Naive thymus-derived CD4-positive, alpha-beta T cell (primary cell): ENCODE measurements at regions of chr6 and their contacts with region 1.

Region 1: DNA sequence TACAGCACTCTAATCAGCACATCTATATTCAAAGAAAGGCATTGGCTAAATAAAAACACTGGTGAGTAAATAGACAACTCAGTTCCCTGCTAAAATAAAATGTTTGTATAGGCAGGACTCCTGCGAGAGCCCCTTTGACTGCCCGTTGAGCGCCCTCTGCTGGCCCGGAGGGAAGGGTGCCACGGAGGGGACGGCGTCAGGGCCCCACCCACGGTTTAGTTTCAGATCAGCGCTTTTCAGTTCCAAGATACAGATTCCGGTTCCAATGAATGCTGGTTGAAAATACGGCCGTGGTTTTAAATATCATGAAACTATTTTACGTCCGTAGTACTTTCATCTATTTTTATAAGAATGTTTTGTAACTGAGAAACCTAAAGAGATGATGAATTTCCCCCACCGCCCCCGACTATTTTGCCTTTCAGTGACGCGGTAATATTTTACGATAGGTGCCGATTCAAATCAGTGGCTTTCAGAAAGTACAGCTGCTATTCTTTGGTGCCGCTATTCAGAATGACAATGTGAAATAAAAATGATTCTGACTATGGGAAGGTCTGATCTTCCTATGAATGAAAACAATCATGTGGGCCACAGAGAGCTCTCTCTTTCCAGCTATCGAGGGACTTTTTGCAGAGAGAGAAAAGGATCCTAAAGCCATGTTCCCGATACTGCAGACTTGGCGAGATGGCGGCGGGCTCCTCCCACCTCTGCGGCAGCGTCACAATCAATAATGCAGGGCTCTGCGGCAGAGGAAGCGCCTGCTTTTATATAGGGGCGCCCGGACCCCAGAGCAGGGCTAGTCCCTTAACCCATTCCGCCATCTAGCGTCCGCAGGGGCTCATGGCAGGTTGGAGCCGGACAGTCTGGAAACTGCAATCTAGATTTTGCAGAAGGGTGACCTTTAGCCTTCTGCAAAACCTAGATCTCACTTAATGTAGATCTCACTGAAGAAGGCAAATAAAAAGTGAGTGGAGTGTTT is 10.6 kb upstream of the CCN6 start:
- DNase-seq: peak; percentile 82 to 93 (median 90)
- ATAC-seq: peak; percentile 95
- H3K4me3 ChIP-seq: peak overlapping the region; percentile 92
- H3K4me3 Mint-ChIP-seq: peak overlapping the region; percentile 92 to 99 (median 98)
- H3K27ac ChIP-seq: peak overlapping the region; percentile 91
- H3K27ac Mint-ChIP-seq: peak overlapping the region; percentile 96 to 100 (median 99)
- H3K4me1 ChIP-seq: peaks cover 5 to 24% of the 10 kb centered on the region in 2 donors
- H3K4me1 Mint-ChIP-seq: peaks cover 10 to 51% (median 35%) of the 10 kb centered on the region in 7 donors
- H3K27me3 ChIP-seq: no peaks in the 10 kb centered on the region
- H3K27me3 Mint-ChIP-seq: no peaks in the 10 kb centered on the region

Region 2: DNA sequence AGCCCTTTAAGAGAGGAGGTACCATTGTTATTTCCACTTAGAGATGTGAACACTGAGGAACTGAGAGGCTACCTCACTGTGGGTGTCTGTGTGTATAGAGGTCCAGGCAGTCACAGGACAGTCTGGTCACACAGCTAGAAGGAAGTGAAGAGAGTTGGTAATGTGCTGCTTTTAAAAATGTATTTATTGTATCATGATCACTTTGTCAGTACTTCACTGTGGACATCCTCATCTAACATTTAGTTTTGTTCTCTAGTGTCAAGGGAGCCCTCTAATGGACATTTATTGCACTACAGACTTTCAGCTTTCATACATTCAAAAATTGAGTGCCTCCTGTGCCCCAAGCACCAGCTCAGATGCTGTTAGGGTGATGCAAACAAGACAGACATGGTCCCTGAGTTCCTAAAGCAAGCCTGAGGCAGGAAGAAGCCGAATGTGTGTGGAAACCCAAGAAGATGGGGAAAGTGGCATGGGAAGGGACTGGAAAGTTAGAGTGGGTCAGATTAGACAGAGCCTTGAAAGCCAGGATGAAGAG is 833.1 kb before region 1 on chr6:
- CTCF ChIA-PET with region 1: no interaction called
- POLR2A ChIA-PET with region 1: no interaction called
- intact Hi-C with region 1: loop called in 1 of 2 experiments (anchors 1 kb)
- DNase-seq: peak in 7 of 9 donors; percentile 46 to 73 (median 63)
- ATAC-seq: peak; percentile 88
- H3K4me3 ChIP-seq: no peak overlapping the region
- H3K4me3 Mint-ChIP-seq: no peak overlapping the region
- H3K27ac ChIP-seq: no peak overlapping the region
- H3K27ac Mint-ChIP-seq: peak overlapping the region in 1 of 9 donors; percentile 8
- H3K4me1 ChIP-seq: no peaks in the 10 kb centered on the region
- H3K4me1 Mint-ChIP-seq: peaks cover 0 to 18% (median 9%) of the 10 kb centered on the region in 7 donors
- H3K27me3 ChIP-seq: no peaks in the 10 kb centered on the region
- H3K27me3 Mint-ChIP-seq: no peaks in the 10 kb centered on the region

Region 3: GRCh38 chr6:111483736-111484632 is 559.3 kb before region 1 on chr6:
- CTCF ChIA-PET with region 1: interaction called, 5 read pairs
- POLR2A ChIA-PET with region 1: no interaction called
- intact Hi-C with region 1: loop called (anchors 1 kb)
- DNase-seq: peak in 6 of 9 donors; percentile 80 to 89 (median 86)
- ATAC-seq: peak; percentile 79
- H3K4me3 ChIP-seq: peak overlapping the region; percentile 93
- H3K4me3 Mint-ChIP-seq: peak overlapping the region; percentile 96 to 100 (median 98)
- H3K27ac ChIP-seq: peak overlapping the region; percentile 99
- H3K27ac Mint-ChIP-seq: peak overlapping the region; percentile 95 to 99 (median 99)
- H3K4me1 ChIP-seq: peaks cover 14 to 29% of the 10 kb centered on the region in 2 donors
- H3K4me1 Mint-ChIP-seq: peaks cover 28 to 59% (median 52%) of the 10 kb centered on the region in 7 donors
- H3K27me3 ChIP-seq: no peaks in the 10 kb centered on the region
- H3K27me3 Mint-ChIP-seq: peaks cover 0 to 3% (median 0%) of the 10 kb centered on the region in 5 donors

Region 4: GRCh38 chr6:111804627-111805235 is 238.6 kb before region 1 on chr6:
- CTCF ChIA-PET with region 1: interaction called, 4 read pairs
- POLR2A ChIA-PET with region 1: no interaction called
- intact Hi-C with region 1: loop called (anchors 1 kb)
- DNase-seq: peak in 8 of 9 donors; percentile 31 to 77 (median 56)
- ATAC-seq: peak; percentile 89
- H3K4me3 ChIP-seq: peak overlapping the region; percentile 7
- H3K4me3 Mint-ChIP-seq: peak overlapping the region; percentile 20 to 73 (median 64)
- H3K27ac ChIP-seq: peak overlapping the region; percentile 68
- H3K27ac Mint-ChIP-seq: peak overlapping the region; percentile 78 to 97 (median 92)
- H3K4me1 ChIP-seq: peaks cover 59 to 64% of the 10 kb centered on the region in 2 donors
- H3K4me1 Mint-ChIP-seq: peaks cover 54 to 96% (median 88%) of the 10 kb centered on the region in 7 donors
- H3K27me3 ChIP-seq: no peaks in the 10 kb centered on the region
- H3K27me3 Mint-ChIP-seq: no peaks in the 10 kb centered on the region

Region 5: GRCh38 chr6:111973118-111973761 is 70.1 kb before region 1 on chr6:
- CTCF ChIA-PET with region 1: no interaction called
- POLR2A ChIA-PET with region 1: interaction called, 3 read pairs
- intact Hi-C with region 1: loop called in 1 of 2 experiments (anchors 1 kb)
- DNase-seq: peak; percentile 41 to 92 (median 88)
- ATAC-seq: peak; percentile 90
- H3K4me3 ChIP-seq: peak overlapping the region; percentile 17
- H3K4me3 Mint-ChIP-seq: peak overlapping the region; percentile 55 to 82 (median 67)
- H3K27ac ChIP-seq: peak overlapping the region; percentile 95
- H3K27ac Mint-ChIP-seq: peak overlapping the region; percentile 84 to 99 (median 96)
- H3K4me1 ChIP-seq: peaks cover 7 to 77% of the 10 kb centered on the region in 2 donors
- H3K4me1 Mint-ChIP-seq: peaks cover 37 to 95% (median 82%) of the 10 kb centered on the region in 7 donors
- H3K27me3 ChIP-seq: no peaks in the 10 kb centered on the region
- H3K27me3 Mint-ChIP-seq: peaks cover 0 to 10% (median 0%) of the 10 kb centered on the region in 5 donors

Region 6: GRCh38 chr6:112018619-112019416 is 24.5 kb before region 1 on chr6:
- CTCF ChIA-PET with region 1: interaction called, 339 read pairs
- POLR2A ChIA-PET with region 1: interaction called, 175 read pairs
- intact Hi-C with region 1: no loop called
- DNase-seq: no peak
- ATAC-seq: no peak
- H3K4me3 ChIP-seq: no peak overlapping the region
- H3K4me3 Mint-ChIP-seq: no peak overlapping the region
- H3K27ac ChIP-seq: no peak overlapping the region
- H3K27ac Mint-ChIP-seq: peak overlapping the region in 3 of 9 donors; percentile 4 to 58 (median 19)
- H3K4me1 ChIP-seq: peaks cover 0 to 5% of the 10 kb centered on the region in 2 donors
- H3K4me1 Mint-ChIP-seq: peaks cover 21 to 80% (median 45%) of the 10 kb centered on the region in 7 donors
- H3K27me3 ChIP-seq: no peaks in the 10 kb centered on the region
- H3K27me3 Mint-ChIP-seq: no peaks in the 10 kb centered on the region

Region 7: GRCh38 chr6:112109262-112109661 is 65.9 kb after region 1 on chr6:
- CTCF ChIA-PET with region 1: no interaction called
- POLR2A ChIA-PET with region 1: no interaction called
- intact Hi-C with region 1: no loop called
- DNase-seq: no peak
- ATAC-seq: no peak
- H3K4me3 ChIP-seq: no peak overlapping the region
- H3K4me3 Mint-ChIP-seq: no peak overlapping the region
- H3K27ac ChIP-seq: no peak overlapping the region
- H3K27ac Mint-ChIP-seq: no peak overlapping the region
- H3K4me1 ChIP-seq: no peaks in the 10 kb centered on the region
- H3K4me1 Mint-ChIP-seq: no peaks in the 10 kb centered on the region
- H3K27me3 ChIP-seq: no peaks in the 10 kb centered on the region
- H3K27me3 Mint-ChIP-seq: peaks cover 0 to 45% (median 24%) of the 10 kb centered on the region in 5 donors

Region 8: GRCh38 chr6:112163295-112164257 is 120.3 kb after region 1 on chr6:
- CTCF ChIA-PET with region 1: no interaction called
- POLR2A ChIA-PET with region 1: no interaction called
- intact Hi-C with region 1: loop called in 1 of 2 experiments (anchors 1 kb)
- DNase-seq: peak; percentile 43 to 81 (median 64)
- ATAC-seq: peak; percentile 97
- H3K4me3 ChIP-seq: no peak overlapping the region
- H3K4me3 Mint-ChIP-seq: peak overlapping the region; percentile 49 to 88 (median 79)
- H3K27ac ChIP-seq: no peak overlapping the region
- H3K27ac Mint-ChIP-seq: peak overlapping the region in 7 of 9 donors; percentile 10 to 79 (median 48)
- H3K4me1 ChIP-seq: peaks cover 3 to 7% of the 10 kb centered on the region in 2 donors
- H3K4me1 Mint-ChIP-seq: peaks cover 9 to 18% (median 14%) of the 10 kb centered on the region in 7 donors
- H3K27me3 ChIP-seq: no peaks in the 10 kb centered on the region
- H3K27me3 Mint-ChIP-seq: peaks cover 25 to 60% (median 48%) of the 10 kb centered on the region in 5 donors